PC-3 (cell line): ENCODE measurements at regions of chr2 and their contacts with region 1.

Region 1: GRCh38 chr2:12716282-12717190 is at the start of gene TRIB2:
- DNase-seq: peak; percentile 82
- ATAC-seq: peak; percentile 53
- H3K4me3 ChIP-seq: peak within 1 kb of the TSS; percentile 95
- H3K27ac ChIP-seq: peak within 1 kb of the TSS; percentile 99
- H3K4me1 ChIP-seq: peaks cover 34% of the 10 kb centered on the region
- H3K27me3 ChIP-seq: no peaks in the 10 kb centered on the region
- CTCF ChIP-seq: peak; percentile 34; the same call in 1 of the 2 replicates
- total RNA-seq, gene TRIB2: 35.2 and 51.8 TPM in 2 replicates

Region 2: GRCh38 chr2:11829947-11830707 is 886.4 kb before region 1 on chr2:
- CTCF ChIA-PET with region 1: interaction called, 15 read pairs
- POLR2A ChIA-PET with region 1: interaction called, 11 read pairs
- intact Hi-C with region 1: loop called (anchors 1 kb)
- DNase-seq: peak; percentile 98
- ATAC-seq: peak; percentile 85
- H3K4me3 ChIP-seq: peak overlapping the region; percentile 58
- H3K27ac ChIP-seq: peak overlapping the region; percentile 94
- H3K4me1 ChIP-seq: peaks cover 23% of the 10 kb centered on the region
- H3K27me3 ChIP-seq: no peaks in the 10 kb centered on the region
- CTCF ChIP-seq: peak; percentile 77

Region 3: GRCh38 chr2:12155303-12156051 is 561.1 kb before region 1 on chr2:
- CTCF ChIA-PET with region 1: no interaction called
- POLR2A ChIA-PET with region 1: no interaction called
- intact Hi-C with region 1: loop called (anchors 2 kb)
- DNase-seq: peak; percentile 97
- ATAC-seq: peak; percentile 99
- H3K4me3 ChIP-seq: no peak overlapping the region
- H3K27ac ChIP-seq: peak overlapping the region; percentile 66
- H3K4me1 ChIP-seq: peaks cover 20% of the 10 kb centered on the region
- H3K27me3 ChIP-seq: no peaks in the 10 kb centered on the region
- CTCF ChIP-seq: no peak

Region 4: GRCh38 chr2:12320991-12321641 is 395.4 kb before region 1 on chr2:
- CTCF ChIA-PET with region 1: interaction called, 18 read pairs
- POLR2A ChIA-PET with region 1: interaction called, 3 read pairs
- intact Hi-C with region 1: loop called (anchors 1 kb)
- DNase-seq: peak; percentile 87
- ATAC-seq: peak; percentile 3; the same call in 1 of the 2 replicates
- H3K4me3 ChIP-seq: no peak overlapping the region
- H3K27ac ChIP-seq: peak overlapping the region; percentile 52
- H3K4me1 ChIP-seq: peaks cover 70% of the 10 kb centered on the region
- H3K27me3 ChIP-seq: no peaks in the 10 kb centered on the region
- CTCF ChIP-seq: peak; percentile 31; the same call in 1 of the 2 replicates

Region 5: GRCh38 chr2:12534646-12535263 is 181.8 kb before region 1 on chr2:
- CTCF ChIA-PET with region 1: interaction called, 14 read pairs
- POLR2A ChIA-PET with region 1: no interaction called
- intact Hi-C with region 1: no loop called
- DNase-seq: peak; percentile 96
- ATAC-seq: peak; percentile 90
- H3K4me3 ChIP-seq: no peak overlapping the region
- H3K27ac ChIP-seq: peak overlapping the region; percentile 81
- H3K4me1 ChIP-seq: peaks cover 33% of the 10 kb centered on the region
- H3K27me3 ChIP-seq: no peaks in the 10 kb centered on the region
- CTCF ChIP-seq: no peak

Region 6: DNA sequence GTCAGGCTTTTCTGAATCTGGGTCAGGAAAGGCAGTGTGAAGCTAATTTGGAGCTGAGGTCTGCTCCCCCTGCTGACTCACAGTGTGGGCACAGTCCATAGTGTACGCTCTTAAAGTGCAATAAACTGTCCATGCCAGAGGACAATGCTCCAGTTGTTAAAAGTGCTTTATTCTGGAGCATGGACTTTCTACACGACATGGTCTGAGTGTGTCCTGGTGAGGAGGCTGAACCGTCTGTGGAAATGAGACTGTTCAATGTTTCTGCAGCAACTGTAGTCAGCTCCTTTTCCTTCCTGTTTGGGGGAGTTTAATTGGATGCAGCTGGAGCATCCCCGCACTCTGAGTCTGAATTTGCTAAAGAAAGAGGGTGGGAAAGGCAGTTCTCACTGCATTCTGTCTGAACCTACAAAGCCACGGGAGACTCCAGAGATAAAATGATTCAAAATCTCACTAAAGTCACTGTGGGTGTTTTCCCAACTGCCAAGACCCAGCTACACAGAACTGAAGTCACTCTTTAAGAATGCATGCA is 110.0 kb before region 1 on chr2:
- CTCF ChIA-PET with region 1: interaction called, 3 read pairs
- POLR2A ChIA-PET with region 1: no interaction called
- intact Hi-C with region 1: loop called (anchors 5 kb)
- DNase-seq: peak; percentile 61
- ATAC-seq: peak; percentile 97
- H3K4me3 ChIP-seq: no peak overlapping the region
- H3K27ac ChIP-seq: no peak overlapping the region; the same call in 1 of the 2 replicates
- H3K4me1 ChIP-seq: peaks cover 23% of the 10 kb centered on the region
- H3K27me3 ChIP-seq: no peaks in the 10 kb centered on the region
- CTCF ChIP-seq: peak; percentile 45

Region 7: GRCh38 chr2:12856934-12857601 is 140.5 kb after region 1 on chr2:
- CTCF ChIA-PET with region 1: no interaction called
- POLR2A ChIA-PET with region 1: interaction called, 6 read pairs
- intact Hi-C with region 1: loop called (anchors 1 kb)
- DNase-seq: peak; percentile 92
- ATAC-seq: peak; percentile 69
- H3K4me3 ChIP-seq: peak overlapping the region; percentile 40
- H3K27ac ChIP-seq: peak overlapping the region; percentile 79
- H3K4me1 ChIP-seq: peaks cover 34% of the 10 kb centered on the region
- H3K27me3 ChIP-seq: no peaks in the 10 kb centered on the region
- CTCF ChIP-seq: no peak